OCI-LY7 (cell line): ENCODE measurements at regions of chrX and their contacts with region 1.

Region 1: GRCh38 chrX:135596495-135596894 is 76.0 kb downstream of the INTS6L start:
- DNase-seq: peak; percentile 42
- H3K4me3 ChIP-seq: no peak overlapping the region
- H3K27ac ChIP-seq: no peak overlapping the region
- H3K4me1 ChIP-seq: no peaks in the 10 kb centered on the region
- CTCF ChIP-seq: peak; percentile 73

Region 2: DNA sequence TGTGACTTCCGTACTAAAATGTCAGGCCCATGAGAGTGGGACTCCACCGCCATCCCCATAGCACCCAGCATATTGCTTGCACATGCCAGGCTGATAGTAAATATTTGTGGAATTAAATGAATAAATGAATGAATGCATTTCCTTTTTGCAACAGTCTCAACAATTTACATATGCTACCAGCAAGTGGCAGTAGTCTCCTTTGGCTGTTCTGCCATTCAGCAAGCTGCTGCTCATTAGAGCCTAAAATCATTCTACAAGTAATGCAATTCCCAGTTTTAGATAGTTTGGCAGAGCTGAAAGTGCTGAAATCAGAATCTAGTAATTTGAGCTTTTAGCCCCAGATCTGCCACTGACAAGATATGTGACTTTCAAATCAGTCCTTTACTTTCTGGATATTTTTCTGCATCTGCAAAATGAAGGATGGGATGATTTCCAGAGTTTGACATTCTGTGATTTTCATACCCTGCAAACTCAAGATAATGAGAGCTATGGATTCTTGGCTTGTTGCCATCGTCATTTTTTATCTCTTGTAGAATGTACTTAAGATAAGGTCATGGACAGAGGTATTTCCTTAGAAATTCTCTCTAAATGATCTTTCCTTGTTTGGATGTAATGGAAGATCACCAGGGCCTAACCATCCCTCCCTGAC is 111.7 kb before region 1 on chrX:
- CTCF ChIA-PET with region 1: no interaction called
- POLR2A ChIA-PET with region 1: no interaction called
- intact Hi-C with region 1: loop called (anchors 2 kb)
- DNase-seq: peak; percentile 50
- H3K4me3 ChIP-seq: no peak overlapping the region
- H3K27ac ChIP-seq: no peak overlapping the region
- H3K4me1 ChIP-seq: no peaks in the 10 kb centered on the region
- CTCF ChIP-seq: peak; percentile 76

Region 3: DNA sequence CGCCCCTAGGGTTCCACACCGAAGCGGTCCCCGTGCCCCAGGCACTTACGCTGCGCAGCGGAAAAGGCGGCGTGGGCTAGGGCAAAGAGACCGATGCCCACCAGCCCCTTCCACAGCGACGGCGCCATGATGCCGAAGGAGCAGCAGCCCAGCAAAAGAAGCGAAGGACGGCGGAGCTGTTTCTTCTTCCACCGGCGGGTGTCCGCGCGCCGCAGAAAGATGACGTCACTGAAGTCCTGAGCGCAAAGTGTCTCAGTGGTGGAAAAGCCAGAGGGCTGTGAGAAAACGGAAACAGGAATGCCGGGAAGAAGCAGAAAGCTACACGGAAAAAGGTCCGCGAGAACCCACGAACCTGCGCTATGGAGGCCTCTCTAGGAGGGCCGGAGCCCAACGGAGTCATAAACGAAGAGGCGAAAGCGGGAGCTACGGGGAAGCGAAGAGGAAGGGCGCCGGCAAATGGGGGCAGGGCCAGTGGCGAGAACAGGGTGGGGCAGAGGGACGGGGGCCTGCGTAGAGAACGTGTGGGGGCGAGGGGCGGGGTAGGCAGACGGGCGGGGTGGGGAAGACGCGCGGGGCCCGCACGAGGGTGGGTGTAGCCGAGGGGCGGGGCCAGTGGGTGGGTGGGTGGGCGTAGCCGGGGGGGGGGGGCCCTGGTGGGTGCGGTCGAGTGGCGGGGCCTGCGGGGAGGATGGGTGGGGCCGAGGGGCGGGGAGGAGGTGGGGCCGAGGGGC is 377.2 kb after region 1 on chrX and contains the start of gene MMGT1:
- CTCF ChIA-PET with region 1: no interaction called
- POLR2A ChIA-PET with region 1: no interaction called
- intact Hi-C with region 1: no loop called
- DNase-seq: peak; percentile 85
- H3K4me3 ChIP-seq: peak within 1 kb of the TSS; percentile 96
- H3K27ac ChIP-seq: peak within 1 kb of the TSS; percentile 53
- H3K4me1 ChIP-seq: peaks cover 22% of the 10 kb centered on the region
- CTCF ChIP-seq: no peak
- total RNA-seq, gene MMGT1: 7.7 and 8.9 TPM in 2 replicates